IMR-90 (cell line): ENCODE measurements at regions of chr3 and their contacts with region 1.

Region 1: DNA sequence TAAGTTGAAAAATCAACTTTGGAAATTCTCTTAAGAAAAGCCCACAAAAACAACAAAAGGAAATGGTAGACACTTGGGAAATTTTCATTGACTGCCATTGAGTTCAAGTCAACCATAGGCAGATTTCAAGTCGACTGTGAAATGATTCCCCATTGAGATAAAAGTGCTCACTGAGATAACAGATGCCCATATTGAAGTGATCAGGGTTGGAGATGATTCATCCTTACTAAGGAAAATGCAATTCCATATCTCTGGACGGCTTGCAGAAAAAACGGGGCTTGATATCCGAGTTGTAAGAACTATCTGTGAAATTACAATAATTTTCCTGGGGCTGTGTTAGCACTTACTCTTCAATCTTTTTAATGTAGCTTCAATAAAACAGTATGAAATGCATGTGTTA is 373.1 kb upstream of the THRB start:
- DNase-seq: no peak
- ATAC-seq: no peak
- H3K4me3 ChIP-seq: no peak overlapping the region
- H3K27ac ChIP-seq: no peak overlapping the region
- H3K4me1 ChIP-seq: no peaks in the 10 kb centered on the region
- H3K27me3 ChIP-seq: no peaks in the 10 kb centered on the region
- CTCF ChIP-seq: no peak
- POLR2A ChIP-seq: no peak
- RAD21 ChIP-seq: no peak

Region 2: DNA sequence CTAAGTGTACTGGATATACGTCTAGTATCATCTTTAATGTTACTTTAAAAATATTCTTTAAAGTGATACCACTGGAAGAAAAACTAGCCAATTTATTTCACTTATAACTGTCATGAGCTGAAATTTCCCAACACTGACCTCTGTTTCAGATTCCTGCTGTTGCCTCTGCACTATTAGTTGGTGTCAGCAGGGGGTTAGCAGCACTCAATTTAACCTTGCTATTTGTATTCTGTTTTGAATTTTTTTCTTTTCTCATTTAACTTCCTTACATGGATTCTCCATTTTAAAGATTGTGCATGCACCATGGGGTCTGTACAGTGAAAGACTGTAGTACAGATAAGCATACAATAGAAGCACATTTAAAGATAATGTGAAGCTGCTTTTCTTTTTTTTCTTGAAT is 1495.5 kb before region 1 on chr3:
- CTCF ChIA-PET with region 1: no interaction called
- POLR2A ChIA-PET with region 1: no interaction called
- dilution Hi-C with region 1: no loop called
- in situ Hi-C with region 1: no loop called
- intact Hi-C with region 1: loop called (anchors 10 kb)
- DNase-seq: no peak
- ATAC-seq: no peak
- H3K4me3 ChIP-seq: no peak overlapping the region
- H3K27ac ChIP-seq: no peak overlapping the region
- H3K4me1 ChIP-seq: no peaks in the 10 kb centered on the region
- H3K27me3 ChIP-seq: no peaks in the 10 kb centered on the region
- CTCF ChIP-seq: no peak
- POLR2A ChIP-seq: no peak
- RAD21 ChIP-seq: no peak

Region 3: DNA sequence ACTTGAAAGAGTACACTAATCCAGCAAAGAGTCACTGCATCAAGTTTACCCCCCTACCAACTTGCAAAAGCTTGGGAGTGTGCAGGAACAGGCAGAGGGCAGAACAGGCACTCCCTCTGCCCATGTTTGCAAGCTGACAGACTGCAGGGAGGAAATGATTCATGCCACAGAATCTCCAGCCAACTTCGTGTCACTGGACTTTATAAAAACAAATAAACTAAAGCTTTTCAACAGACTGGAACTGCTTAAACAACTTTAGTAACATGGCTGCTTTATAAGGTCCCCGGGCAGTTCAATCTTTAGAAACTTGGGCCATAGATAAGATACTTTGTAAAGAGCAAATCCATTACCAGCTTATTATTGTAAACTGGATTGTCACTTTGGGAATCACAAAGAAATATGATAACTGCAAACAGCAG is 502.6 kb before region 1 on chr3:
- CTCF ChIA-PET with region 1: no interaction called
- POLR2A ChIA-PET with region 1: no interaction called
- dilution Hi-C with region 1: no loop called
- in situ Hi-C with region 1: no loop called
- intact Hi-C with region 1: no loop called
- DNase-seq: peak; percentile 68
- ATAC-seq: peak; percentile 91
- H3K4me3 ChIP-seq: no peak overlapping the region
- H3K27ac ChIP-seq: no peak overlapping the region
- H3K4me1 ChIP-seq: no peaks in the 10 kb centered on the region; the same call in 1 of the 2 replicates
- H3K27me3 ChIP-seq: no peaks in the 10 kb centered on the region
- CTCF ChIP-seq: no peak
- POLR2A ChIP-seq: no peak
- RAD21 ChIP-seq: no peak